Ascending aorta (tissue), 2 donors: ENCODE measurements at regions of chr6 and their contacts with region 1.

Region 1: GRCh38 chr6:56637640-56638039 is 5.0 kb downstream of the DST start:
- DNase-seq: no peak
- H3K4me3 ChIP-seq: no peak overlapping the region
- H3K27ac ChIP-seq: peak overlapping the region in 1 of 2 donors; percentile 24
- H3K4me1 ChIP-seq: peaks cover 0 to 7% of the 10 kb centered on the region in 2 donors
- H3K27me3 ChIP-seq: no peaks in the 10 kb centered on the region
- CTCF ChIP-seq: peak; percentile 58 to 68 (median 58)

Region 2: GRCh38 chr6:56683882-56684281 is 46.2 kb after region 1 on chr6:
- intact Hi-C with region 1: no loop called
- DNase-seq: peak in 1 of 2 donors; percentile 88
- H3K4me3 ChIP-seq: no peak overlapping the region
- H3K27ac ChIP-seq: peak overlapping the region; percentile 66 to 81
- H3K4me1 ChIP-seq: peaks cover 0 to 25% of the 10 kb centered on the region in 2 donors
- H3K27me3 ChIP-seq: no peaks in the 10 kb centered on the region
- CTCF ChIP-seq: no peak

Region 3: DNA sequence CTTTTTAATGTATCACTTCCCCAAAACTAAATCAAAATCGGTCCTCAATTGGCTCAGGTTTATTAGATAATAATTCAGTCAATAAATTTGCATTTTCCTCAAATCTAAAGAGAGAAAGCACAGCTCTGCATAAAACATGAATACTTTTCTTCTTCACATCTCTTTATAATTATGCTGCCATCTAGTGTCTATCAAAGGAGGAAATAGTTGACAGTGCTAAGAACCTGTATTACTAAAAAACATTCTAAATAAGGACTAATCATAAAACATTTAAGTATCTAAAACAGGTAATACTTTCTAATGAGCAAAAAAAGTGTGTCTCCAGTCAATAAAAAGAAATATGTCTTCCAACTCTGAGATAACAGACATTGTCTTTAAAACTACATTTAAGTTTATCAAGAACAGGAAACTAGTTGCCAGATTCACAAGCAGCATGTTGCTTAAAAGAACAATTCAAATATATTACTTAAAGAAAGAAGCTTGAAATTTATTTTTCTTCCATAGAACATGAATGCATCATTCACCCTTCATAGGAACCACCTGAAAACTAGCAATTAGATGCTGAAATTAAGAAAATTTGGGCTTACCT is 61.5 kb after region 1 on chr6:
- intact Hi-C with region 1: loop called (anchors 1 kb)
- DNase-seq: no peak
- H3K4me3 ChIP-seq: no peak overlapping the region
- H3K27ac ChIP-seq: no peak overlapping the region
- H3K4me1 ChIP-seq: peaks cover 0 to 4% of the 10 kb centered on the region in 2 donors
- H3K27me3 ChIP-seq: no peaks in the 10 kb centered on the region
- CTCF ChIP-seq: peak; percentile 46 to 69 (median 54)

Region 4: DNA sequence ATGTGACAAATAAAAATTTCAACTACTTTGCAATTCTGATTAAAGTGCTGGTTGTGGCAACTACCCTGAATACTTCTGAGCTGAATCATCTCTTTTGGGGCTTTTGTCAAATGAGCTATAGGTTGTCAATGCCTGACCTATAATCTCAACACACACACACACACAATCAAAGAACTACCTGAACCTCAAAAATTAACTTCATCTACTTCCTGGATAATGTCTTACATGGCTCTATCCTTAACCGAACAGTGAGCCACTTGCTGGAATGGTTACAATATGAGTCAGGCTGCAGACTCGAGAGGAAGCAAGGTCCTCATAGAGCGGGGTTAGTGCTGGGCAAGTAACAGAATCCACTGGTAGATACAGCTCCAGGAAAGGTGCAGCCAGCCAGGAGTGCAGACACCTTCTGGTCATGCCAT is 75.6 kb after region 1 on chr6:
- intact Hi-C with region 1: no loop called
- DNase-seq: peak in 1 of 2 donors; percentile 82
- H3K4me3 ChIP-seq: no peak overlapping the region
- H3K27ac ChIP-seq: peak overlapping the region; percentile 46 to 76
- H3K4me1 ChIP-seq: peaks cover 4 to 25% of the 10 kb centered on the region in 2 donors
- H3K27me3 ChIP-seq: no peaks in the 10 kb centered on the region
- CTCF ChIP-seq: no peak

Region 5: GRCh38 chr6:56757588-56757984 is 119.9 kb after region 1 on chr6:
- intact Hi-C with region 1: loop called (anchors 2 kb)
- DNase-seq: no peak
- H3K4me3 ChIP-seq: no peak overlapping the region
- H3K27ac ChIP-seq: peak overlapping the region; percentile 6 to 43
- H3K4me1 ChIP-seq: peaks cover 0 to 31% of the 10 kb centered on the region in 2 donors
- H3K27me3 ChIP-seq: no peaks in the 10 kb centered on the region
- CTCF ChIP-seq: peak; percentile 31 to 51 (median 38)

Region 6: DNA sequence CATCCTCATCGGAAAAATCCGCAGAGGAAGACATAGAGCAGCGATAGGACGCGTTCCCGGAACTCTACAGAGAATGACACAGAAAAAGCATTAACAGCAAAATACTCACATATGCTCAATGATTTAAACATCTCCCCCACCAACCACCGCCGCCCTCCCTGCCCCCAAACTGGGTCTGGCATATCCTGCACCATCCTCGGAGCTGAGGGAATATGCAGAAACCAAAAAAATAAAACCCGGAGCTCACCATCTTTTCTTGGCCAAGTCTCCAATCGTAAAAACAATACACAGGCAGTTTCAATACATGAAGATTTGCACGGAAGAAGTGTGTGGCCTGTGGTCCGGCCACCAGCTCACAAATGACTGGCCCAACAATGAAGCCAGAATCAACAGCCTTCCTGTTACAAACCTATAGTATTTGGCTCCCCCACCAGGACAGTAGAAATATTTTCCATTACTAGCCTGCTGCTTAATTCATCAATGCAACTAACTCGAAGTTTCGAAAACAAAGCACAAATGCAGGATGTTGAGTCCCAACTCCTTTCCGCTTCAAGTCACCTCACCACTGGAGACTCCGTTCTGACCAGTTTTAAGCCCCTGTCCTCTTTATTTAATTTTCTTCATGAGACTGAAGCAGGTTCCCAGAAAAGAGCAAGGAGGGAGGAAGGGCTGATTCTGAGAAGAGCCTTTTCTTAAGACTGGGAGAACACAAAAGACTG is 214.1 kb after region 1 on chr6:
- intact Hi-C with region 1: loop called (anchors 1 kb)
- DNase-seq: peak in 1 of 2 donors; percentile 77
- H3K4me3 ChIP-seq: peak overlapping the region; percentile 66 to 73
- H3K27ac ChIP-seq: peak overlapping the region; percentile 67 to 69
- H3K4me1 ChIP-seq: peaks cover 0 to 9% of the 10 kb centered on the region in 2 donors
- H3K27me3 ChIP-seq: no peaks in the 10 kb centered on the region
- CTCF ChIP-seq: peak; percentile 42 to 75 (median 69)